BJ (cell line): ENCODE measurements at regions of chr9 and their contacts with region 1.

Region 1: DNA sequence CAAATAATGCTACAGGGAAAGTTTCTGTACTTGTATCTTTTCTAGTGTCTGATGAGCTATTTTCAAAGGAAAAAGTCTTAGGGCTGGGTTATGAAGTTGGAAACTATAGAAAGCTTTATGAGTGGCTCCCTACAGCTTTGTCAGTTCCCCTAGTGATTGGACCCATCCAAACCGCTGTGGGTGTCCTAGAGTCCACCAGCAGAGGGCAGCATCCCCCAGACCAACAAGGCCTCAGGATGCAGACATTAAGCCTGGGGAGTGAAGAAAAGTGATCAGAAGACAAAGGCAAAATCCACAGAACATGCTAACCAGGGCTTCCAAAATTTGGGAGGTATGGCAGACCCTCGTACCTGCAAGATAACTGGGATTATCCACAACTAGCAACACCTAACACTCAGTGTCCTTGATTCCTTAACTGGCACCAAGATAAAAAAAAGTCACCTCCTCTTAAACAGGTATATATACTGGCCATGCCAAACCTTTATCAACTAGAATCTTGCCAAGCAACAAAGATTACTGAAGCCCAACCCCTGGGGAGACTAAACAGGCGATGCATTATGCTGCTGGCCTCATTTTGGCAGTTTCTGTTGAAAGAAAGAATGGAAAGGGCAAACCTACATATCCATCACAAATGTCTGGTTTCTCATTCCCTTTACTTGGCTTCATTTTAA is 110.4 kb upstream of the NR5A1 start:
- DNase-seq: no peak
- H3K4me3 ChIP-seq: no peak overlapping the region
- H3K27me3 ChIP-seq: no peaks in the 10 kb centered on the region
- CTCF ChIP-seq: peak; percentile 90

Region 2: DNA sequence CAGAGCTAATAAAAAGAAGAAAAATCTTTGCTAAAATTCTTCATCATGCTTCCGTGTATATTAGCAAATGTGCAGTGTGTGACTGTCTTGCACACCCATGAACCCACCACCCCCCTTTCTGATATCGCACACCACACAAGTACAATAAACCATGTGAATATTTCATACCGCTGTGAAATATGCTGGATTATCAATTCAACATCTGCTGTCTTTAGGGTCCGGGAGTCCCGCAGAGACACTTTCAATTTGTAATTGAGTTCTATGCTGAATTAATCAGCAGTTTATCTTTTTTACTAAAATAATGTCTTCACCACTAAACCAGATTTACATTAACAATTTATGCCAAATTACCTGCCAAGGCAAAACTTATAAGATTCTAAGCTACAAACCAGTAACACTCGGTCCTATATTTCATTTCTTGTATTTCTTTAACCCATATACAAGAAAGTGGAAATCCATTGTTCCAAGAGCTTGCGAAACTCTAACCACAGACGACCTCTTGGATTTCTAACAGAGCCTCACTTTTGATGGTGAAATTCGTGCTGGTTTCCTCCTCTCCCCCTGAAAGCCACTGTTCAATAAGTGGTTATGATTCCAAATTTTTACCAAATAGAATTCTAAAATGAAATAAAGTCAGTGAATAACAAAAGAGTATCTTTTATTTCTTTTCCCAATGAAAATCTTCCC is 246.6 kb before region 1 on chr9:
- CTCF ChIA-PET with region 1: no interaction called
- POLR2A ChIA-PET with region 1: no interaction called
- DNase-seq: no peak
- H3K4me3 ChIP-seq: no peak overlapping the region
- H3K27me3 ChIP-seq: no peaks in the 10 kb centered on the region
- CTCF ChIP-seq: no peak

Region 3: GRCh38 chr9:124629600-124629999 is 12.0 kb after region 1 on chr9:
- CTCF ChIA-PET with region 1: interaction called, 19 read pairs
- POLR2A ChIA-PET with region 1: interaction called, 3 read pairs
- DNase-seq: no peak
- H3K4me3 ChIP-seq: no peak overlapping the region
- H3K27me3 ChIP-seq: no peaks in the 10 kb centered on the region
- CTCF ChIP-seq: no peak

Region 4: DNA sequence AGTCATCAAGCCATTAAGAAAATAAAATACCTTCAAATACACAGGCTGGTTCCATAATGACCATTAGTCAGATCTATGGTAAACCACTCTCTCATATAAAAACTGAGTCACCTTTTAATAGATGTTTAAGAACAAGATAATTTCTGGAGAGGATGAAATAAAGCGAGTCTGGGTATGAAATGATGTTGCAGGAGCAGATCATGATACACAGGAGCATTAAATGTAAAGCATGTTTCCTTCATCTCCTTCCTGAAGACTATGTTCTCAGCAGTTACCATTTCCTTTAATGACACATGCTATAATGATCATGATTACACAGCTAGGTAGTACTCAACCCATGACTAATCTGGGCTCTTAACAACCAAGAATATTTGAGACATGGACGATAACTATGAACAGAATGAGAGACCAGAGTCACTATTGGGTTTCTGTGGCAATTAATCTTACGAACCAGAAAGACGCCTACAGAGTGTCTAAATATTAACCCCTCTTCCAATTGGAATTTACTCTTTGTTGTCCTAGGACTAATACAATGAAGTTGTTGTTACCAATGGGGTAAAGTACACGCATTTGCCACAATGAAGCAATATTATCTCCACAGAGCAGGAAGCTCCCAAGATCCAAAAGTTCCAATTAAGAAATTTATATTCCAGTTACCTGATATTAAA is 47.9 kb after region 1 on chr9:
- CTCF ChIA-PET with region 1: interaction called, 30 read pairs
- POLR2A ChIA-PET with region 1: no interaction called
- DNase-seq: peak; percentile 62
- H3K4me3 ChIP-seq: no peak overlapping the region
- H3K27me3 ChIP-seq: no peaks in the 10 kb centered on the region
- CTCF ChIP-seq: no peak

Region 5: DNA sequence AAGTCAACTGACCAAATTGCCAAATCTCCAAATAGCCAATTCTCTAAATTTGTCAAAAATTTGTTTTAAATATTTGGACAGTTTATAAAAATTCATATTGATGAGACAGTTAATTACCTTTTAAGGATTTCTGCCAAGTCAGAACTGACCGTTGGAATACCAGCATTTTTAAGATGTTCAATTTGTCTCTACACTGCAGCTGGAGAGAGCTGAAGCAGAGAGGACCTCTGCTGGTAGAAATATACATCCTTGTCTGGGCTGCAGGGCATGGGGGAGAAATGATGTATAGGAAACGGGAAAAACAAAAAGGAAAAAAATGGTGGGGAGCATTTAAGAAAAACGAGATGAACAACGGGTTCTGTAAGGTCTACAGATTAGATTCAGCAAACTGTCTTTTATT is 136.7 kb after region 1 on chr9:
- CTCF ChIA-PET with region 1: interaction called, 10 read pairs
- POLR2A ChIA-PET with region 1: no interaction called
- DNase-seq: no peak
- H3K4me3 ChIP-seq: no peak overlapping the region
- H3K27me3 ChIP-seq: peaks cover 2% of the 10 kb centered on the region
- CTCF ChIP-seq: peak; percentile 72